ENCODE measurements at regions of chr12 and their contacts with region 1.

Region 1: GRCh38 chr12:75390899-75391538 is at the start of gene GLIPR1L2:
- DNase-seq: peak; percentile 95
- ATAC-seq: peak; percentile 97
- H3K4me3 Mint-ChIP-seq: peak within 1 kb of the TSS; percentile 93
- H3K27ac Mint-ChIP-seq: peak within 1 kb of the TSS; percentile 97
- H3K4me1 Mint-ChIP-seq: peaks cover 49% of the 10 kb centered on the region
- H3K27me3 Mint-ChIP-seq: no peaks in the 10 kb centered on the region
- total RNA-seq, gene GLIPR1L2: 0.39 to 0.50 TPM

Region 2: DNA sequence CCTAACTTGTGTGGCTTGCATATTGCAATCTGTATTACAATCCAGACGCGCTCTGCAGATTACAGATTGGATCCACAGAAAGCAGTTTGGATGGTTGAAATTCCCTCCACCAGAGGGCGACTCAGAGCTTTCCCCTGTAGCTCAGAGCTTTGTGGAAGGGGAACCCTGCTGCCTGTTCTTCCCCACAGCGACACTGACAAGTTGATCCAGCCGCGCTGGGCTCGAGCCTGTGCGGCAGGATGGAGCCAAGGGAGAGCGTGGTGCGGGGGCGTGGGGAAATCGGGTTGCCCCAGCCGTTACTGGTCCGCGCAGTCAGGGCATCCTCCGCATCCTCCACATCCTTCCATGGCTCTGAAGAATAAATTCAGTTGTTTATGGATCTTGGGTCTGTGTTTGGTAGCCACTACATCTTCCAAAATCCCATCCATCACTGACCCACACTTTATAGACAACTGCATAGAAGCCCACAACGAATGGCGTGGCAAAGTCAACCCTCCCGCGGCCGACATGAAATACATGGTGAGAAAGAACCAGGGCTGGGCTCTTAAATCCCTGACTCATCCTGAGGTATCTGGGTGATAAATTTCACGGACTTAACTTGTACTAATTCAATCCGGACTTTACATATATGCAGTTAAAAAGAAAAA is 56.5 kb before region 1 on chr12 and contains the start of gene GLIPR1L1:
- CTCF ChIA-PET with region 1: interaction called, 14 read pairs
- POLR2A ChIA-PET with region 1: no interaction called
- intact Hi-C with region 1: loop called (anchors 1 to 2 kb)
- DNase-seq: peak; percentile 91
- ATAC-seq: peak; percentile 82
- H3K4me3 Mint-ChIP-seq: peak within 1 kb of the TSS; percentile 61
- H3K27ac Mint-ChIP-seq: no peak within 1 kb of the TSS
- H3K4me1 Mint-ChIP-seq: peaks cover 25% of the 10 kb centered on the region
- H3K27me3 Mint-ChIP-seq: peaks cover 21% of the 10 kb centered on the region
- total RNA-seq, gene GLIPR1L1: not detected

Region 3: DNA sequence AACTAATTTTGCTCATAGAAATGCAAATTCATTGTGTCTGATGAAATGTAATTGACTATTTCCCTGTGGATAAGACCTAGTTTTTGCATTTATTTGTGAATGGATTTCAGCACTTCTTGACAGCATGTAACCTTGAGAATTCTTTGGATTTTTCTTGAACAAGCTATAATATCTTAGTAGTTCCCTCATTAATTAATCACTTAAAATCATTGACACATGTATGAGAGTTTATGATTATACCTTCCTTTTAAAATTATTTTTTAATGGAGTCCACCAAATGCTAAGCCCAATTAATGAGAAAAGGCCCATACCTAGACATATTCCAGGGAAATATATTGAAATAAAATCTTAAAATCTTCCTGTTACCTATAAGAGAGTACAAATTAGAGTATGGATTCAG is 16.7 kb after region 1 on chr12:
- CTCF ChIA-PET with region 1: interaction called, 10 read pairs
- POLR2A ChIA-PET with region 1: no interaction called
- intact Hi-C with region 1: no loop called
- DNase-seq: no peak
- ATAC-seq: no peak
- H3K4me3 Mint-ChIP-seq: no peak overlapping the region
- H3K27ac Mint-ChIP-seq: no peak overlapping the region
- H3K4me1 Mint-ChIP-seq: no peaks in the 10 kb centered on the region
- H3K27me3 Mint-ChIP-seq: no peaks in the 10 kb centered on the region

Region 4: GRCh38 chr12:75505706-75506312 is 114.8 kb after region 1 on chr12:
- CTCF ChIA-PET with region 1: interaction called, 5 read pairs
- POLR2A ChIA-PET with region 1: no interaction called
- intact Hi-C with region 1: loop called (anchors 1 to 2 kb)
- DNase-seq: no peak
- ATAC-seq: no peak
- H3K4me3 Mint-ChIP-seq: no peak overlapping the region
- H3K27ac Mint-ChIP-seq: peak overlapping the region; percentile 11
- H3K4me1 Mint-ChIP-seq: peaks cover 30% of the 10 kb centered on the region
- H3K27me3 Mint-ChIP-seq: no peaks in the 10 kb centered on the region

Region 5: DNA sequence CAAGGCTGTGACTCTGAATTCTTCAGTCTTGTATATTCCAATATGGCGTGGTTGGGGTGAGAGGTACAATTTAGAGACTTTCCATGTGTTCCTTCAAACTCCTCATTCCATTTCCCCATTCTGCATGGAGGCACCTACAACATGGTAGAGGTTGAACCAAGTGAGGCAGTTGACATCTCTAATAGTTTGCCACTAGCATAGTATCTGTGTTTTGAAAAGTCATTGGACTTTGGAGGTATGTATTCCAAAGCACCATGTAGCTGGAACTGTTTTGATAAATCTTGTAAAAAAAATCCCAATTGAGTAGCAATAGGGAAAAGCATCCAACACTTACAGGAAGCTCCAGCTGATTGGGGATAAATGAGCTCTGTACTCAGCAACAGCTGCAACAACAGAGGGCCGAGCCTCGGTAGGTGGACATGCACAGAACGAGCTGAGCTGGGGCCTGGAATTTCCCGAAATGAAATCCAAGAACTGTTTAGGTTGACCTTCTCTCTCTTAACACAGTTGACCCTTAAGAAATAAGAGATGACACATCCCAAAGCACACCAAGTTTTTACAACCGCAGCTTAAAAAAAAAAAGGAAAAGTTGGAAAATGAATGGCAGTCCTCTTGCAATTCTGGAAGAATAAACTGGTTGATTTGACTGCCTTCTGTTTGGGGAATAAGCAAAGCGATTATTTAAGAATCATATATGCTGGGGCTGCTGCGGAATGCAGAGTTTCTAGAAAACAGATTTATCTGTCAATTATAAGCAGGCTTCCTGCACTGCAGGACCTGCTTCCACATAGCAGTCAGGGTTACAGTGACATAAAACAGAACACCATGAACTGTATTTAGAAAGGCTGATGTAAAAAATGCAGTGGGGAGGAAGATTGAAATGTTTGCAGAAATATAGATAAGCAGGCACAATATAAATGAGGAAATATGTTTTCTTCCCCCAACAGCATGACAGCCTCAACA is 315.0 kb after region 1 on chr12:
- CTCF ChIA-PET with region 1: no interaction called
- POLR2A ChIA-PET with region 1: no interaction called
- intact Hi-C with region 1: no loop called
- DNase-seq: no peak
- ATAC-seq: no peak
- H3K4me3 Mint-ChIP-seq: no peak overlapping the region
- H3K27ac Mint-ChIP-seq: no peak overlapping the region
- H3K4me1 Mint-ChIP-seq: peaks cover 7% of the 10 kb centered on the region
- H3K27me3 Mint-ChIP-seq: peaks cover 4% of the 10 kb centered on the region

Region 6: GRCh38 chr12:75977952-75978671 is 587.1 kb after region 1 on chr12:
- CTCF ChIA-PET with region 1: no interaction called
- POLR2A ChIA-PET with region 1: no interaction called
- intact Hi-C with region 1: loop called in 1 of 2 experiments (anchors 1 kb)
- DNase-seq: peak; percentile 85
- ATAC-seq: peak; percentile 80
- H3K4me3 Mint-ChIP-seq: peak overlapping the region; percentile 59
- H3K27ac Mint-ChIP-seq: peak overlapping the region; percentile 100
- H3K4me1 Mint-ChIP-seq: peaks cover 69% of the 10 kb centered on the region
- H3K27me3 Mint-ChIP-seq: no peaks in the 10 kb centered on the region

Region 7: GRCh38 chr12:76037130-76038103 is 646.4 kb after region 1 on chr12:
- CTCF ChIA-PET with region 1: interaction called, 3 read pairs
- POLR2A ChIA-PET with region 1: no interaction called
- intact Hi-C with region 1: loop called in 1 of 2 experiments (anchors 5 kb)
- DNase-seq: peak; percentile 38
- ATAC-seq: peak; percentile 68
- H3K4me3 Mint-ChIP-seq: no peak overlapping the region
- H3K27ac Mint-ChIP-seq: no peak overlapping the region
- H3K4me1 Mint-ChIP-seq: peaks cover 22% of the 10 kb centered on the region
- H3K27me3 Mint-ChIP-seq: no peaks in the 10 kb centered on the region

Region 8: GRCh38 chr12:76763743-76764675 is 1373.0 kb after region 1 on chr12 and contains the start of gene ZDHHC17:
- CTCF ChIA-PET with region 1: no interaction called
- POLR2A ChIA-PET with region 1: no interaction called
- intact Hi-C with region 1: loop called in 1 of 2 experiments (anchors 5 kb)
- DNase-seq: peak; percentile 93
- ATAC-seq: peak; percentile 89
- H3K4me3 Mint-ChIP-seq: peak within 1 kb of the TSS; percentile 96
- H3K27ac Mint-ChIP-seq: peak within 1 kb of the TSS; percentile 97
- H3K4me1 Mint-ChIP-seq: peaks cover 41% of the 10 kb centered on the region
- H3K27me3 Mint-ChIP-seq: no peaks in the 10 kb centered on the region
- total RNA-seq, gene ZDHHC17: 17.6 to 22.7 TPM

Measured in activated CD4-positive, alpha-beta T cell treated with anti-CD3 and anti-CD28 coated beads for 36 hours (primary cell).